CD4-positive, alpha-beta memory T cell (primary cell): ENCODE measurements at regions of chr16 and their contacts with region 1.

Region 1: DNA sequence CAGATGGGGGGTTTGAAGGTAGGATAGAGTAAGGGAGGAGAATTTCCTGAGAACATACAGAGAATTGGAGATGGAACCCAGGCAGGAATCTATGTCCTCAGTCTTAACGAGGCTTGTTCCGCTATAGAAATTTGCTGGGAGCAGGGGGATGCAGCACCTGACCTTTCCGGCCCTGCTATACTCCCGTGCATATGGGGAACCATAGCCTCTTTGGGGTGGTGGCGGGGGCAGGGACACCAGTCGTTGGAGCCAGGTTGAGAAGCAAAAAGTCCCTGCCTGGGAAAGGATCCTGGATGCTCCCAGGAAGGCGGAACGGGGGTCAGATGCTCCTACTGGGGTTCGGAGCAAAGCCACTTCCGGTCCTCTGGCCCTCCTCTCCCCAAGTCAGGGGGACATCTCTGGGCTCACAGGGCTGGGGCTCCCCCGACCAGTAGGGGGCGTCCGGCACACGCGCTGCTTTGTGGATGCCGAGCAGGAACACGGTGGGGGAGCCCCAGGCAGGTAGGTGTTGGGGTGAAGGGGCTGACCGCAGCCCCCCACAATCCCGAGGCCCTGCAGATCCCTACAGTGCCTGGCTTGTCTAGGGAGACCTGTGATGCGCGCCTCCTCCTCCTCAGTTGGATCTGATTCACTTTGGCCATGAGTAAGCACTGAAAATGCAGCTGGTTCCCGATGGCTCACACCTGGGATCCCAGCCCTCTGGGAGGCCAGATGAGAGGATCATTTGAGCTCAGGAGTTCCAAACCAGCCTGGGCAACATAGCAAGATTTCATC is 15.5 kb upstream of the TFAP4 start:
- DNase-seq: peak; percentile 74 to 79 (median 77)
- H3K4me3 ChIP-seq: no peak overlapping the region
- H3K4me3 Mint-ChIP-seq: peak overlapping the region in 1 of 8 donors; percentile 43
- H3K27ac ChIP-seq: no peak overlapping the region
- H3K27ac Mint-ChIP-seq: peak overlapping the region in 2 of 7 donors; percentile 55 to 57
- H3K4me1 ChIP-seq: peaks cover 7% of the 10 kb centered on the region
- H3K4me1 Mint-ChIP-seq: peaks cover 2 to 18% (median 7%) of the 10 kb centered on the region in 4 donors
- H3K27me3 ChIP-seq: no peaks in the 10 kb centered on the region
- H3K27me3 Mint-ChIP-seq: peaks cover 10 to 18% of the 10 kb centered on the region in 2 donors

Region 2: DNA sequence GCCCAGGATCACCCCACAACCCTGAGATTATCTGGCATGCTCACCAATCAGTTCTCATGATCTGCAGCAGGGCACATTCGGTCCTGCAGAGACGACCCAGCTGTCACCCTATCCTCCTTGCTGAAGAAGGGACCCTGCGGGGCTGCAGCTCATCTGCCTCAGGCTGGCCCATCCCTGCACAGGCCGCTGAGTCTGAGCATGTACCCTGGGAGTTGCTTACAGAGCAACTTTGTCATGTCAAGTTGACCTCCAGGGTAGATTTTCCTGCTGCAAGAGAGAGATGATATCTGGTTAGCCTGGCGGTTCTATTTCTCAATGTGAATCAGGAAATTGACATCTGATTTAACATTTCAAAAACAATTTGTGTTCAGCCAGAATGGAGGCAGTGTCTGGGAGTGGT is 136.1 kb before region 1 on chr16:
- CTCF ChIA-PET with region 1: no interaction called
- POLR2A ChIA-PET with region 1: no interaction called
- intact Hi-C with region 1: no loop called
- DNase-seq: no peak
- H3K4me3 ChIP-seq: no peak overlapping the region
- H3K4me3 Mint-ChIP-seq: no peak overlapping the region
- H3K27ac ChIP-seq: no peak overlapping the region
- H3K27ac Mint-ChIP-seq: no peak overlapping the region
- H3K4me1 ChIP-seq: no peaks in the 10 kb centered on the region
- H3K4me1 Mint-ChIP-seq: no peaks in the 10 kb centered on the region
- H3K27me3 ChIP-seq: no peaks in the 10 kb centered on the region
- H3K27me3 Mint-ChIP-seq: no peaks in the 10 kb centered on the region

Region 3: GRCh38 chr16:4307215-4308037 is 19.1 kb after region 1 on chr16:
- CTCF ChIA-PET with region 1: interaction called, 35 read pairs
- POLR2A ChIA-PET with region 1: no interaction called
- intact Hi-C with region 1: no loop called
- DNase-seq: peak; percentile 97 to 99 (median 98)
- H3K4me3 ChIP-seq: peak overlapping the region; percentile 47 to 85
- H3K4me3 Mint-ChIP-seq: peak overlapping the region; percentile 87 to 97 (median 92)
- H3K27ac ChIP-seq: peak overlapping the region; percentile 76
- H3K27ac Mint-ChIP-seq: peak overlapping the region; percentile 96 to 100 (median 99)
- H3K4me1 ChIP-seq: peaks cover 18% of the 10 kb centered on the region
- H3K4me1 Mint-ChIP-seq: peaks cover 17 to 33% (median 20%) of the 10 kb centered on the region in 4 donors
- H3K27me3 ChIP-seq: no peaks in the 10 kb centered on the region
- H3K27me3 Mint-ChIP-seq: no peaks in the 10 kb centered on the region

Region 4: DNA sequence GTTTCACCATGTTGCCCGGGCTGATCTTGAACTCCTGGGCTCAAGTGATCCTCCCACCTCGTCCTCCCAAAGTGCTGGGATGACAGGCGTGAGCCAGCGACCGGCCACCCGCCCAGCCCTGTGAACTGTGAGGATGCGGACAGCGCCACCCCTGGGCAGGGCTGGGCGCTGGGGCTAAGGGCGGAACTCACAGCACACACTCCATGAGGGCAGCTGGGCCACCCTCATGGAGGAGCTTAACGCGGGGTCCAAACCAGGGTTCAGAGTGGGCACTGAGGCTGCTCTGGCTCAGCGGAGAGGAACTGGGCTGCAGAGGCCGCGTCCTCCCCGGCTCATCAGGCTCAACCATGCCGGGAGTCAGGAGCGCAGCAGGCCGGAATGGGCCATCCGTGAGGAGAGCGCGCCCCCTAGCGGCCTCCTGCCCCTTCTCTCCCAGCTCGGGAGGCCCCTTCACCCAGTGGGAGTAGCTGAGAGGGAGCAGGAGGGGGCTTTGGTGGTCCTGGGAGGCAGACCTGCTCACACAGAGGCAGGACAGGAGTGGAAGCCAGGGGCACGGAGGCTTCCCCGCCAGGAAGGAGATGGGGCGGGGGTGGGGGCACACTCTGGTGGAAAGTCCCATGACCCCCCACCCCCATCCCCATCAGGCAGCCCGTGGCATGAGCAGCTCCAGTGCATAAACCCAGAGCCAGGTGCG is 114.3 kb after region 1 on chr16:
- CTCF ChIA-PET with region 1: interaction called, 9 read pairs
- POLR2A ChIA-PET with region 1: interaction called, 3 read pairs
- intact Hi-C with region 1: loop called (anchors 2 kb)
- DNase-seq: peak; percentile 51 to 63 (median 60)
- H3K4me3 ChIP-seq: no peak overlapping the region
- H3K4me3 Mint-ChIP-seq: peak overlapping the region in 1 of 8 donors; percentile 36
- H3K27ac ChIP-seq: no peak overlapping the region
- H3K27ac Mint-ChIP-seq: peak overlapping the region in 3 of 7 donors; percentile 41 to 87 (median 56)
- H3K4me1 ChIP-seq: no peaks in the 10 kb centered on the region
- H3K4me1 Mint-ChIP-seq: peaks cover 19 to 36% (median 24%) of the 10 kb centered on the region in 4 donors
- H3K27me3 ChIP-seq: no peaks in the 10 kb centered on the region
- H3K27me3 Mint-ChIP-seq: no peaks in the 10 kb centered on the region

Region 5: DNA sequence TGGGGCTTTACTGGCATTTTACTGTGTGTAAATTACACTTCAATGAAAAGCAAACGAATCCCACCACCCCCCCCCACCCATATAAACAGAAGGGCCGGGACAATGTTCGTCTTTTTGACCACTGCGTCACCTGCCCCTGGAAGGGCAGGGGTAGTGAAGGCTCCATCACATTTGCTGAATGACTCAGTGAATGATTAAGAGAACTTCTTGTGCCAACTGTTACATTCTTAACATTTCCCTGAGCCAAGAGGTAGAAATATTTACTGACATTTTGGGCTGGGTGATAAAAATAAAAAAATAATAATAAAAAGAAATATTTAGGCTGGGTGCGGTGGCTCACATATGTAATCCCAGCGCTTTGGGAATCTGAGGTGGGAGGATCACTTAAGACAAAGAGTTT is 291.9 kb after region 1 on chr16:
- CTCF ChIA-PET with region 1: interaction called, 8 read pairs
- POLR2A ChIA-PET with region 1: no interaction called
- intact Hi-C with region 1: loop called (anchors 1 kb)
- DNase-seq: no peak
- H3K4me3 ChIP-seq: no peak overlapping the region
- H3K4me3 Mint-ChIP-seq: no peak overlapping the region
- H3K27ac ChIP-seq: no peak overlapping the region
- H3K27ac Mint-ChIP-seq: no peak overlapping the region
- H3K4me1 ChIP-seq: no peaks in the 10 kb centered on the region
- H3K4me1 Mint-ChIP-seq: no peaks in the 10 kb centered on the region
- H3K27me3 ChIP-seq: no peaks in the 10 kb centered on the region
- H3K27me3 Mint-ChIP-seq: no peaks in the 10 kb centered on the region